ENCODE measurements at regions of chr2 and their contacts with region 1.

Region 1: DNA sequence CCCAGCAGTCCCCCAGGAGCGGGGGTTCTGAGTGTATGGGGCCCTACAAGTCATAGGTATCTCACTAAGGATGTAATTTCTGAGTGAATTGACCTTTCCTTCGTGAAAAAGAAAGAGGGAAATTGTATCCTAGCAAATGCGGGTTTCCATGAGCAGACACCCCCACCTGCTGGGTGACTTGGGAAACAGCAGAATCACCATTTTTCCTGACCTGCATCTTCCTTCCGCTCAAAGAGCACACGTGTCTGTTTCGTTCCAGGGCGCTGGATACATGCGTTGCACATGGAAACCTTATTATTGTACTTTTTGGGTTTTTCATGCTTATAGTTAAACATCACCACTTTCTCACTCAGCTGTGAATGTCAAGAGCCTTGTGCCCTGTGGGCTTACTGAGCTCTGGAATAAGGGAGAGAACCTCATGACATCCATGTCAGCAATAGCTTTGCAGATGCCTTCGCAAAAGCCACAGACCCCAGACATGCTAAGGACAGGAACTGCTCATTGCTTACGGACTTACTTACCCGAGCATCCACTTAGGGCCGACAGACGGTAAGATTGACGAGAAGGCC is 132.8 kb downstream of the TPO start:
- DNase-seq: peak in 2 of 3 donors; percentile 24 to 44
- ATAC-seq: peak; percentile 53
- H3K4me3 ChIP-seq: no peak overlapping the region
- H3K4me1 ChIP-seq: no peaks in the 10 kb centered on the region
- CTCF ChIP-seq: peak; percentile 48

Region 2: GRCh38 chr2:854460-854859 is 691.6 kb before region 1 on chr2:
- intact Hi-C with region 1: loop called in 1 of 2 experiments (anchors 10 kb)
- DNase-seq: peak in 2 of 3 donors; percentile 78 to 85
- ATAC-seq: peak; percentile 73
- H3K4me3 ChIP-seq: no peak overlapping the region
- H3K4me1 ChIP-seq: no peaks in the 10 kb centered on the region
- CTCF ChIP-seq: peak; percentile 44

Region 3: GRCh38 chr2:1652034-1652790 is 106.1 kb after region 1 on chr2:
- intact Hi-C with region 1: no loop called
- DNase-seq: no peak
- ATAC-seq: no peak
- H3K4me3 ChIP-seq: no peak overlapping the region
- H3K4me1 ChIP-seq: peaks cover 7% of the 10 kb centered on the region
- CTCF ChIP-seq: no peak

Measured in mucosa of descending colon (tissue), 3 donors.